ENCODE measurements at regions of chr19 and their contacts with region 1.

Region 1: GRCh38 chr19:41541990-41542584 is 33.9 kb upstream of the CEACAM21 start:
- DNase-seq: peak; percentile 89
- ATAC-seq: no peak
- H3K4me3 Mint-ChIP-seq: no peak overlapping the region
- H3K27ac Mint-ChIP-seq: peak overlapping the region; percentile 63
- H3K4me1 Mint-ChIP-seq: peaks cover 56% of the 10 kb centered on the region
- H3K27me3 Mint-ChIP-seq: no peaks in the 10 kb centered on the region

Region 2: GRCh38 chr19:41439441-41440222 is 102.5 kb before region 1 on chr19 and contains the start of gene DMAC2:
- CTCF ChIA-PET with region 1: interaction called, 10 read pairs
- DNase-seq: peak; percentile 99
- ATAC-seq: peak; percentile 96
- H3K4me3 Mint-ChIP-seq: no peak within 1 kb of the TSS
- H3K27ac Mint-ChIP-seq: no peak within 1 kb of the TSS
- H3K4me1 Mint-ChIP-seq: peaks cover 19% of the 10 kb centered on the region
- H3K27me3 Mint-ChIP-seq: no peaks in the 10 kb centered on the region
- total RNA-seq, gene DMAC2: 43.2 to 56.5 TPM

Region 3: GRCh38 chr19:41449079-41449864 is 92.8 kb before region 1 on chr19:
- CTCF ChIA-PET with region 1: interaction called, 190 read pairs
- DNase-seq: peak; percentile 83
- ATAC-seq: peak; percentile 93
- H3K4me3 Mint-ChIP-seq: peak overlapping the region; percentile 63
- H3K27ac Mint-ChIP-seq: no peak overlapping the region
- H3K4me1 Mint-ChIP-seq: peaks cover 18% of the 10 kb centered on the region
- H3K27me3 Mint-ChIP-seq: peaks cover 11% of the 10 kb centered on the region

Region 4: GRCh38 chr19:41531438-41532311 is 10.4 kb before region 1 on chr19:
- CTCF ChIA-PET with region 1: interaction called, 20 read pairs
- DNase-seq: peak; percentile 89
- ATAC-seq: peak; percentile 76
- H3K4me3 Mint-ChIP-seq: peak overlapping the region; percentile 71
- H3K27ac Mint-ChIP-seq: peak overlapping the region; percentile 75
- H3K4me1 Mint-ChIP-seq: peaks cover 74% of the 10 kb centered on the region
- H3K27me3 Mint-ChIP-seq: peaks cover 23% of the 10 kb centered on the region

Region 5: GRCh38 chr19:41570639-41571112 is 28.6 kb after region 1 on chr19:
- CTCF ChIA-PET with region 1: interaction called, 497 read pairs
- DNase-seq: peak; percentile 89
- ATAC-seq: peak; percentile 96
- H3K4me3 Mint-ChIP-seq: no peak overlapping the region
- H3K27ac Mint-ChIP-seq: peak overlapping the region; percentile 63
- H3K4me1 Mint-ChIP-seq: peaks cover 22% of the 10 kb centered on the region
- H3K27me3 Mint-ChIP-seq: no peaks in the 10 kb centered on the region

Region 6: DNA sequence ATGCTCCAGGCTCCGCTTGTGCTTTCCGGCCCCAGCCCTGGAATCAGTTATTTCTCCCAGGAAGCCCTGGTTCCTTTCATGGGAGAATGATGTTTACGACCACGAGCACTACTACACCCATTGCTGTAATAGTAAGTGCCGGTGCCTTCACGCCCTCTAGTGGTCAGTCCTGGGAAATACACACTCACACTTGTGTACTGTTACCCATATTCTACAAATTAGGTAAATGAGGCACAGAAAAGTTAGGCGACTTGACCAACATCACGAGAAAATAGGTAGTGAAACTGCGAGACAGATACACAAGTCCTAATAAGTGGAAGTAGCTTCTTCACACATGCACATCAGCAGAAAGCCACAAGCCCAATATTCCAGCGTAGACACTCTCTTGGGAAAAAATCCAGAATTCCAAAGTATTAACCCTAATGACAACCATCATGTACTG is 55.5 kb after region 1 on chr19:
- CTCF ChIA-PET with region 1: interaction called, 39 read pairs
- DNase-seq: peak; percentile 87
- ATAC-seq: peak; percentile 75
- H3K4me3 Mint-ChIP-seq: no peak overlapping the region
- H3K27ac Mint-ChIP-seq: no peak overlapping the region
- H3K4me1 Mint-ChIP-seq: peaks cover 17% of the 10 kb centered on the region
- H3K27me3 Mint-ChIP-seq: peaks cover 48% of the 10 kb centered on the region